Activated CD8-positive, alpha-beta T cell treated with anti-CD3 and anti-CD28 coated beads, Interleukin-2, amount 10 ng/mL, durations not matched to agents 7 days and 5 days (primary cell): ENCODE measurements at regions of chr7 and their contacts with region 1.

Region 1: DNA sequence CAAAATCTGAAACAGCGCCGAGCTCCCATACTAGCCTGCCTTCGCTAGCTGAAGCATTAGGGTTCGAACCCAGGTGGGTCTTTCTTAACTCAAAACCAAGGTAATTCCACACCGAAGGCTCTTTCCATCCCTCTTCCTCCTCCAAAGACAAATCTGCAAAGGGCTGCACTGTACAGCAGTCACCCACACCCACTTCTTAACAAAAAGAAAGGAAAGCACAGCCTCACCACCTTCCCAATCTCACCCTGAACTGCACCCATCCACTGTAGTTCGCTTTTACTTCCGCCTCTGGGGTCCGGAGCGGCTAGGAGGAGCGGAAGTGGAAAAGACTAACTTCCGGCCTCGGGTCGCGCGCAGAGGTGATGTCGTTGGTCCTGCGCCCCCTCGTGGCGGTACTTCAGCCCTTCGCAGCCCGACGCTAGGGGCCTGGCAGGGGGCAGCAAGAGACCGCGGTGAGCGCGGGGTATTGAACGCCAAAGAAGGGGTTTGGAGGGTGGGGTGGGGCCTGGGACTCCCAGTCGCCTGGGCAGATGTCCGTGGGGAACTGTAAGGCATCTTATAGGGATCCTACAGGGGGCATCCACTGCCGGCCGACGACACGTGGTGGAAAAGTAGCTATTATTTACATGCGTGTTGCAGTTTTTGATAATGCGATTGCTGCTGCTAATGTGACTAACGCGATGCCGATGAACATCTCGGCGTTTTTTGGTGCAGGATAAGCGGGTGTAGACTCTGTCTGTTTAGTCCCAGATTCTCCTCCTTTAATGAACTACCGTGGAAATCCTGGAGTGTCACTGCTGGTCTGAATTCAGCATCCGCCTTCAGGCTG is at the start of gene MTERF1:
- DNase-seq: peak; percentile 95
- ATAC-seq: peak; percentile 98
- H3K4me3 Mint-ChIP-seq: peak within 1 kb of the TSS; percentile 83
- H3K27ac Mint-ChIP-seq: peak within 1 kb of the TSS; percentile 89
- H3K4me1 Mint-ChIP-seq: peaks cover 31% of the 10 kb centered on the region
- H3K27me3 Mint-ChIP-seq: no peaks in the 10 kb centered on the region
- total RNA-seq, gene MTERF1: 16.2 to 16.8 TPM

Region 2: DNA sequence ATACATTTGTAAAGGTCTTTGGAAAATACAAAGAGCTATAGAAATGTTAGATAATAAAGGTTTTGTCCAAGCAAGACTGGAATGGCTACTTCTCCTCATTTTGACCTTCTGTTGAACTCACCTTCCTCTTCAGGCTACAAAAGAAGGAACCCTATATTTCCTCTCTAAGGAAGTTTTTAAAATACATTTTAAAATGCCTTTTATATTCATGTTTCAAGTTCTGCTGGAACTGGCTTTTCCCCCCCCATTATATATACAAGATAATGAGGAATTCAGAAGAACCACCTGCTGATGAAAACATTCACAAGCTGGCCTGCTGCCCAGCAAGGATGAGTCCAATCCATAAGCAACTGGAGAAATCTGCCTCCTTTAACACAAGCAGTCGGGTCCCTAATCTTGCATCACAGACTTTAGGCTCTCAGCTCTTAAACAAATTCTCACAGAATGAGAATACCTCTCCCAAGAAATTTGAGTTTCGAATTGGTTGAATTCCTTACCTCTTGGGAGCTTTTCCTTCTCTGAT is 44.7 kb before region 1 on chr7:
- CTCF ChIA-PET with region 1: interaction called, 18 read pairs
- POLR2A ChIA-PET with region 1: no interaction called
- DNase-seq: no peak
- ATAC-seq: no peak
- H3K4me3 Mint-ChIP-seq: no peak overlapping the region
- H3K27ac Mint-ChIP-seq: no peak overlapping the region
- H3K4me1 Mint-ChIP-seq: no peaks in the 10 kb centered on the region
- H3K27me3 Mint-ChIP-seq: no peaks in the 10 kb centered on the region

Region 3: DNA sequence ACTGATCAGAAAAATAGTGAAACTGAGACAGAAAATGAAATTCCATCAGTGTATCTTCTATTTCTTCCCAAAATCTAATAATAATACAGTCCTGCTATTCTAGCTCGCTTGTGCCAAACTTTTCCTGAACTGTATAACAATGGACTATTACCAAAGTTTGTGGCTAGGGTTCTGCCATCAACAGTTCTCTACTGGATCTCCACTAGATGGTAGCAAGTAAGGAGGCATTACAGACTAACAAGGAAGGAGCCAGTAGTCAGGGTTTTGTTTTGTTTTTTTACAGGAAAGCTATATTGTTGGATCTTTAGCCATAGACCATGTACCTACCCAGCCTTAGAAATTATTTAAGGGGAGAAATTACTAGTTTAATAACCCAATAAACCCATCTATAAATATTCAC is 11.0 kb before region 1 on chr7:
- CTCF ChIA-PET with region 1: interaction called, 12 read pairs
- POLR2A ChIA-PET with region 1: interaction called, 4 read pairs
- DNase-seq: no peak
- ATAC-seq: no peak
- H3K4me3 Mint-ChIP-seq: no peak overlapping the region
- H3K27ac Mint-ChIP-seq: no peak overlapping the region
- H3K4me1 Mint-ChIP-seq: peaks cover 2% of the 10 kb centered on the region
- H3K27me3 Mint-ChIP-seq: no peaks in the 10 kb centered on the region

Region 4: GRCh38 chr7:91913612-91914011 is 33.0 kb after region 1 on chr7:
- CTCF ChIA-PET with region 1: interaction called, 15 read pairs
- POLR2A ChIA-PET with region 1: no interaction called
- DNase-seq: no peak
- ATAC-seq: no peak
- H3K4me3 Mint-ChIP-seq: no peak overlapping the region
- H3K27ac Mint-ChIP-seq: no peak overlapping the region
- H3K4me1 Mint-ChIP-seq: peaks cover 18% of the 10 kb centered on the region
- H3K27me3 Mint-ChIP-seq: peaks cover 3% of the 10 kb centered on the region

Region 5: DNA sequence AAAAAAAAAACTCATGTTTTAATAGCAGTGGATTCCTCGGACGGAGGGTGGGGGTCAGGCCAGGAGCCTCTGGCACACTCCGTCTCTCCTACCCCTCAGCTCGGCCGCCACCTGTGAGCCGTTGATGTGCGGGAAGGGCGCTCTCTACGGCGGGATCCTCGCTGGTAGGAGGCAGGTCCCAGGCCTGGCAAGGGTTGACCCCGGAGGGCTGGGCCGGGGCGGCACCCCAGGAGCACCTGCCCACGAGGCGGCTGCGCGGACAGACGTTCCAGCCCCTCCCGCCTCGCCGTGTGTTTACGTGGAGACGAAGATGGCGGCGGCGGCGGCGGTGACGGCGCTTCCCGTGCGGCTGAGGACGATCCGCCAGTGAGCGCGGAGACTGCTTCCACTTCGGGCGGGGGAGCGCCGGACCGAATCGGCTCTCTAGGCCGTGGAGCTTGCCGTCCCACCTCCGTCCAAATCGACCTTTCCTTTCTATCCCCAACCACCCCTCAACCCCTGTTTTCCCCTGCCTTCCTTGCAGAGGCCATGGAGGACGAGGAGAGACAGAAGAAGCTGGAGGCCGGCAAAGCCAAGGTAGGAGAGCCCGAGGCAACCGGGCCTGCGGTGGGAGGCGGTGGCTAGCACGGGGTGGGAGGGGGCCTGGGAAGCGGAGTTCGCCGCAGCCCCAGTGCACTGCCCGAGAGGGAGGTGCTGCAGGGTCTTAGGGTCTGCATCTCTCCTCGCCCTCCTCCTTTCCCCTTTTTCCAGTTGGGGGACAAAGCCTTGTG is 60.1 kb after region 1 on chr7 and contains the start of gene AKAP9:
- CTCF ChIA-PET with region 1: interaction called, 39 read pairs
- POLR2A ChIA-PET with region 1: interaction called, 13 read pairs
- DNase-seq: peak; percentile 92
- ATAC-seq: peak; percentile 96
- H3K4me3 Mint-ChIP-seq: peak within 1 kb of the TSS; percentile 86
- H3K27ac Mint-ChIP-seq: peak within 1 kb of the TSS; percentile 95
- H3K4me1 Mint-ChIP-seq: peaks cover 22% of the 10 kb centered on the region
- H3K27me3 Mint-ChIP-seq: no peaks in the 10 kb centered on the region
- total RNA-seq, gene AKAP9: 32.7 to 41.5 TPM

Region 6: GRCh38 chr7:92292981-92293380 is 412.4 kb after region 1 on chr7:
- CTCF ChIA-PET with region 1: no interaction called
- POLR2A ChIA-PET with region 1: no interaction called
- DNase-seq: no peak
- ATAC-seq: no peak
- H3K4me3 Mint-ChIP-seq: no peak overlapping the region
- H3K27ac Mint-ChIP-seq: no peak overlapping the region
- H3K4me1 Mint-ChIP-seq: peaks cover 13% of the 10 kb centered on the region
- H3K27me3 Mint-ChIP-seq: no peaks in the 10 kb centered on the region